ENCODE measurements at regions of chr12 and their contacts with region 1.

Region 1: DNA sequence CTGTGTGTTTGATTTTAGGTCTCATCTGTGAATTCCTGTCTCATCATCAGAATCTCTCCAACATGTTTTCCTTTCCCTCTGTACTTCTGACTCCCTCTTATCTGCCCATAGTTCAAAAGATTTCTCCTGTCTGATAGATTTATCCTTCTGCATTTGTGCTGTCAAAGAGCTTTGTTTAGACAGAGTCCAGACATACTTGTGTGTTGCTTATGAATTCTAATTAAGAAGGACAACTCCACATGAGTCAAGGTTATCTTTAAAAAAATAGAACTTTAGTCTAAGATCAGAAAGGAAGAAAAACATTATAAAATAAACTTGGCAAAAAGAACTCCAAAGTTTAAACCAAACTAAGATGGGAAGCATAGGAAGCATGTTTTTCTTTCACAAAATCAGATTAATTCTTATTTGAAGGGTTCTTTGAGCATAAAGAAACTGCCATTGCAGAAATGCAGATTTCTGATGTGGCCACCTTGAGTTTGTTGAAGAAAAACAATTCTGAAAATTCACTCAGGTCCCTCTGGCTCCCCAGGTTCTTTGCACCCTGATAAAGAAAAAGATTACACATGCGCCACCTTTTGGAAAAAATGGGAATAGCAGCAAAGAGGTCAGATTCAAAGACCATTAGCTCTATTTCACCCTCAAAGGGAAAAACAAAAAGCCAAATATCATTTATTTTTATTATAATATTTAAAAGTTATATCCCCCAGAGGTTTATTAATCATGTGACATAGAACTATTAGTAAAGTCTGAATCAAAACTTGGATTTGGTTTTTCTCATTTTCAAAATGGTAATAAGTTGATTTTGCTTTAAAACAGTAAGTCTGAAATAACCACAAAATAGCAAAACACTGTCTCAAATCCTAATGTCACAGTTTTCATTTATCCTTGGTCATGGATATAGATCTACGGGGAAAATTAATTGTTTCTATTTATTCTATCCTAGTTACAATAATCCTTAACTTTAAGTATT is 143.7 kb upstream of the DCN start:
- DNase-seq: peak; percentile 53
- H3K4me3 Mint-ChIP-seq: no peak overlapping the region
- H3K27ac Mint-ChIP-seq: no peak overlapping the region
- H3K4me1 Mint-ChIP-seq: no peaks in the 10 kb centered on the region
- H3K27me3 Mint-ChIP-seq: no peaks in the 10 kb centered on the region

Region 2: GRCh38 chr12:90940872-90941499 is 385.4 kb before region 1 on chr12:
- CTCF ChIA-PET with region 1: interaction called, 3 read pairs
- intact Hi-C with region 1: loop called (anchors 1 kb)
- DNase-seq: no peak
- H3K4me3 Mint-ChIP-seq: no peak overlapping the region
- H3K27ac Mint-ChIP-seq: no peak overlapping the region
- H3K4me1 Mint-ChIP-seq: no peaks in the 10 kb centered on the region
- H3K27me3 Mint-ChIP-seq: peaks cover 11% of the 10 kb centered on the region

Region 3: DNA sequence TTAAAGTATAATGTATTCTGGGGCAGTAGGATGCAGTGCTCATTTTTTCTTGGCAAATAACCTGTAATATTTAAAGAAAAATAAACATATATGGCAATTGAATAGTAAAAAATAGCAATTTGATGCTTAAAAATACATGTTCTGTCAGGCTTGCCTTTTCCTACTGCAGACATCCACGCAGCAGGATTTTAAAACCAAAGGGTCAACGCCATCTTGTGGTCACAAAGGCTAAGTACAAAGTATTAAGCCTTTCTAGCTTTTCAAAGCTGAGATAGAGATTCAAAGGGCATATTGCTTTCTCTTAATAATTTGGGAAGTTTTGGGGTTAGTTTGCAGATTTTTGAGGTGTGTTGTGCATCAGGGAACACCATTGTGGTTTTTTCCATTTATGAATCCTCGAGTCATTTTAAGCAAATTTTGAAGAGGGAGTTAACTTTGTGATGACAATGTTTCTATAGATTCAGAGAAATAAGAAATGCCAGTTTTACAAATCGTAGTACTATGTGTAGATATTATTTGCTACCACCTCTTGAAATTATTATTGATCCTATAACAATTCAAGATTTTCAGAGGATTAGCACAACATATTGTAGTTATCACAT is 366.7 kb before region 1 on chr12:
- CTCF ChIA-PET with region 1: interaction called, 3 read pairs
- intact Hi-C with region 1: loop called (anchors 1 kb)
- DNase-seq: peak; percentile 29
- H3K4me3 Mint-ChIP-seq: no peak overlapping the region
- H3K27ac Mint-ChIP-seq: no peak overlapping the region
- H3K4me1 Mint-ChIP-seq: no peaks in the 10 kb centered on the region
- H3K27me3 Mint-ChIP-seq: no peaks in the 10 kb centered on the region

Region 4: DNA sequence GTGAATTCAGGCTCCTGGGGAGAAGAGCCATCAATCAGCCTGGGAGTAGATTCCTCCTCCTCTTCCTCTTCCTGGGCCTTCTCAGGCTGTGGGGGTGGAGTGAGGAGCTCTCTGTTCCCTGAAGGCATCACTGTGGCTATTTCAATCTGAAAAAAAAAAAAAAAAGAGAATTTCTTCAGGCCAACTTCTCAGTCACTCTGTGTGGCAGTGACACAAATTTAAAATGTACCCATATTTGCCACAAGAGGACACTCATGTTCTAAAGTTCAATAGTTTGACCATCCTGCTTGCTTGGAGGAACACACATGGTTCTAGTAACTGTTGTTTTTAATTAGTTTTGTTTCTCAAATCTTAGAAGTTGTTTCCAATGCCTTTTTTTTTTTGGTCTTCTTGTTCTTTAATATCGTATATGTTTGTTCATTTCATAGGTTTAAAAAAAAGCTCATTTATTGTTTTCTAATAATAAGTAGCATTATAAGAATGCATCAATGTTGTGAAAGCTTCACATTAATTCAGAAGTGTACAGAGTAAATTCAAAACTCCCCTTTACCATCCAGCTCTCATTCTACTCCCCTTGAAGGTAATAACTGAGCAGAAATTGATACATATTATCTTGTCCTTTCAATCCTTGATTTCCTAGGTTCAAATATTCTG is 348.1 kb before region 1 on chr12:
- CTCF ChIA-PET with region 1: interaction called, 3 read pairs
- intact Hi-C with region 1: loop called (anchors 1 kb)
- DNase-seq: no peak
- H3K4me3 Mint-ChIP-seq: no peak overlapping the region
- H3K27ac Mint-ChIP-seq: no peak overlapping the region
- H3K4me1 Mint-ChIP-seq: no peaks in the 10 kb centered on the region
- H3K27me3 Mint-ChIP-seq: peaks cover 6% of the 10 kb centered on the region

Region 5: DNA sequence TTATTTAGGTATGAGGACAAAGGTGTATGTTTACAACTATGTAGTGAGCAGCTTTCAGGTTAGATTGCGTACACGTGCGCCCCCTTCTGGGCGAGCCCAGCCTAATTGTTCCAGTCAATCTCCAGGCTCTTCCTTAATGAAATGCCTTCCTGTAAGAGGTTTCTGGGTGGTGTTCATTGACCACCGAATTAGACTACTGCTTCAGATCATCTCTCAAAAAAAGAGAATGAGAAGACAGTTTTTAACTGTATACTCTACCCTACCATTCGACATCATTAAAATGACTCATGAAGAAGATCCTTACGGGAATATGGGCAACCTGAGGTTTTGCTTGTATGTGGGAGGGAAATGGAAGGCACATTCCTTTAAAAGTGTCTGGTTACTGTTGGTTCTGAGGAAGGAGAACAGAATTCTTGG is 217.2 kb before region 1 on chr12:
- CTCF ChIA-PET with region 1: interaction called, 6 read pairs
- intact Hi-C with region 1: loop called (anchors 2 kb)
- DNase-seq: peak; percentile 74
- H3K4me3 Mint-ChIP-seq: no peak overlapping the region
- H3K27ac Mint-ChIP-seq: no peak overlapping the region
- H3K4me1 Mint-ChIP-seq: no peaks in the 10 kb centered on the region
- H3K27me3 Mint-ChIP-seq: peaks cover 11% of the 10 kb centered on the region

Region 6: DNA sequence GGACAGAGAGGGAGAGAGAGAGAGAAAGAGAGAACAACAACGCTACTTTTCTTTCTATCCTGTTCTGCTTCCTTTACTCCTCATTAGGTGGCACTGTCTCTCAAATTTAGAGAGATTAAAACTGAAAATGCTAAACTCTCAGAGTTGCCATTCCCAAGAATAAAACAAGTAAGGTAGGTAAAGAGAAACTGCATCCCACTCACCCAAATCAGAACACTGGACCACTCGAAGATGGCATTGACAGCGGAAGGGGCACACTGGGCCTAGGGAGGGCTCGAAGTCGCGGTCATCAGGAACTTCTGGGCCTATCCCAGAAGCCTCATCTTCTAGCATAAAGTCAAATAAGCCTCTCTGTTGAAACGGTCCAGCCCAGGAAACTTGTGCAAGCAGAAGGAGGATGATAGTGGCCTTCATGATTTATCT is 148.2 kb before region 1 on chr12:
- CTCF ChIA-PET with region 1: interaction called, 4 read pairs
- intact Hi-C with region 1: loop called (anchors 1 kb)
- DNase-seq: no peak
- H3K4me3 Mint-ChIP-seq: no peak overlapping the region
- H3K27ac Mint-ChIP-seq: no peak overlapping the region
- H3K4me1 Mint-ChIP-seq: peaks cover 4% of the 10 kb centered on the region
- H3K27me3 Mint-ChIP-seq: peaks cover 2% of the 10 kb centered on the region

Measured in activated naive CD4-positive, alpha-beta T cell treated with anti-CD3 and anti-CD28 coated beads for 36 hours (primary cell).